Mammary epithelial cell (primary cell): ENCODE measurements at regions of chr20 and their contacts with region 1.

Region 1: GRCh38 chr20:34532406-34532719 is 16.1 kb downstream of the DYNLRB1 start:
- DNase-seq: no peak
- H3K4me3 ChIP-seq: no peak overlapping the region
- H3K27ac ChIP-seq: no peak overlapping the region
- H3K4me1 ChIP-seq: no peaks in the 10 kb centered on the region
- H3K27me3 ChIP-seq: no peaks in the 10 kb centered on the region
- CTCF ChIP-seq: no peak

Region 2: GRCh38 chr20:34485068-34485634 is 47.2 kb before region 1 on chr20:
- CTCF ChIA-PET with region 1: no interaction called
- dilution Hi-C with region 1: loop called (anchors 5 kb)
- in situ Hi-C with region 1: no loop called
- intact Hi-C with region 1: no loop called
- DNase-seq: no peak
- H3K4me3 ChIP-seq: no peak overlapping the region
- H3K27ac ChIP-seq: no peak overlapping the region
- H3K4me1 ChIP-seq: no peaks in the 10 kb centered on the region
- H3K27me3 ChIP-seq: no peaks in the 10 kb centered on the region
- CTCF ChIP-seq: no peak

Region 3: DNA sequence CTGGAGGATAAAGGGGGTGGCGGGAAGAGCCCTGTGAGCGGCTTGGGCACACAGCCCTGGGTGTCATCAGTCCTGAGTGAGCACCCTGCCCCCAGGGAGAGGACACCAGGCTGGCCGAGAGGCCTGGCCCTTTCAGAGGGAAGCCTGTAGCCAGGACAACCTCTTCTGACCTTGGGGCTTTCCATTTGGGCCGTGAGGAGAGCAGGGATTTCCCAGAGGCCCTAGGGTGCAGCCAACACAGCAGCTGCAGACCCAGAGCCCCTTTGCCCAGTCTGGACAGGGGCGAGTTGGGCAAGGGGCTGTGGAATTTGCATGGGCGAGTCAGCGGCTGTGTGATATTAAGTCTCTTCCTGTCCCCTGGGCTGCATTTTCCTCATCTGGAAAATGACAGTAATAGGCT is 32.5 kb after region 1 on chr20:
- CTCF ChIA-PET with region 1: no interaction called
- dilution Hi-C with region 1: loop called (anchors 5 kb)
- in situ Hi-C with region 1: no loop called
- intact Hi-C with region 1: no loop called
- DNase-seq: no peak
- H3K4me3 ChIP-seq: no peak overlapping the region
- H3K27ac ChIP-seq: no peak overlapping the region
- H3K4me1 ChIP-seq: no peaks in the 10 kb centered on the region
- H3K27me3 ChIP-seq: no peaks in the 10 kb centered on the region
- CTCF ChIP-seq: no peak